Natural killer cell (primary cell): ENCODE measurements at regions of chr20 and their contacts with region 1.

Region 1: GRCh38 chr20:21303061-21303871 is at the start of gene XRN2:
- DNase-seq: peak; percentile 94 to 97
- ATAC-seq: peak; percentile 83 to 92 (median 91)
- H3K4me3 ChIP-seq: peak within 1 kb of the TSS; percentile 71
- H3K4me3 Mint-ChIP-seq: peak within 1 kb of the TSS; percentile 99
- H3K27ac ChIP-seq: peak within 1 kb of the TSS; percentile 81
- H3K27ac Mint-ChIP-seq: peak within 1 kb of the TSS; percentile 95 to 98
- H3K4me1 ChIP-seq: peaks cover 3% of the 10 kb centered on the region
- H3K4me1 Mint-ChIP-seq: peaks cover 26 to 30% of the 10 kb centered on the region in 2 donors
- H3K27me3 ChIP-seq: no peaks in the 10 kb centered on the region
- H3K27me3 Mint-ChIP-seq: peaks cover 0 to 6% of the 10 kb centered on the region in 2 donors
- CTCF ChIP-seq: no peak
- total RNA-seq, gene XRN2: 52.9 to 61.8 (median 57.4) TPM

Region 2: GRCh38 chr20:20712474-20713243 is 590.6 kb before region 1 on chr20 and contains the start of gene RALGAPA2:
- intact Hi-C with region 1: loop called (anchors 5 kb)
- DNase-seq: peak; percentile 93 to 96
- ATAC-seq: peak; percentile 92 to 98 (median 94)
- H3K4me3 ChIP-seq: peak within 1 kb of the TSS; percentile 57
- H3K4me3 Mint-ChIP-seq: peak within 1 kb of the TSS; percentile 93
- H3K27ac ChIP-seq: peak within 1 kb of the TSS; percentile 87
- H3K27ac Mint-ChIP-seq: peak within 1 kb of the TSS; percentile 89 to 94
- H3K4me1 ChIP-seq: peaks cover 17% of the 10 kb centered on the region
- H3K4me1 Mint-ChIP-seq: peaks cover 32 to 34% of the 10 kb centered on the region in 2 donors
- H3K27me3 ChIP-seq: no peaks in the 10 kb centered on the region
- H3K27me3 Mint-ChIP-seq: no peaks in the 10 kb centered on the region
- CTCF ChIP-seq: no peak
- total RNA-seq, gene RALGAPA2: 26.6 to 33.9 (median 33.1) TPM

Region 3: DNA sequence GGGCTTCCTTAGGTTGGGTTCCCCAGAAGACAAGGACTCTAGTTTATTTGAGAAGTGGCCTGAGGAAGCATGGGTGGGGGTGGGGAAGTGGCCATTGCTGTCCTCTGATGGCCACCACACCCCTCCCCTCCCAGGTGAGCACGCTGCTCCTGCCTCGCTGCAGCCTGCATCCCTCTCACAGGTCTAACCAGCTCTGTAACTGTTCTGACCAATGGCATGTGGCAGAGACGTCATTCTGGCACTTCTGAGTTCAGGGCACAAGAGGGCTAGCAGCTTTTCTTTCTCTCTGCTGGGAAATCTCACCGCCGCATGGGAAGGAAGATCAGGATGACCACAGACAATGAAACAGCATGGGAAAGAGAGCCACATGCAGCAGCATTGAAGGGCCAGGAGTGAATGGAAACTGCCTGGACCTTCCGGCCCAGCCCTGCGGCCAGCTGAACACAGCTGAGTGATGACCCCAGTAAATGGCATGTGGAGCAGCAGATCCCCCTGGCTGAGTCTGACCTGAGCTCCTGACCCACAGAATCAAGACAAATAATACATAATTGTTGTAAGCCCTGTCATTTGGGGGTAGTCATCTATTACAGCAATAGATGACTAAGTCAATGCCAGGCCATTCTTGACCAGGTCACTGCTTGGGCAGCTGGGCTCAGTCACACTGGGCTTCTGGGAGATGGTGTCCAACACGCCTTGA is 376.9 kb before region 1 on chr20:
- intact Hi-C with region 1: no loop called
- DNase-seq: no peak
- ATAC-seq: no peak
- H3K4me3 ChIP-seq: no peak overlapping the region
- H3K4me3 Mint-ChIP-seq: no peak overlapping the region
- H3K27ac ChIP-seq: no peak overlapping the region
- H3K27ac Mint-ChIP-seq: no peak overlapping the region
- H3K4me1 ChIP-seq: no peaks in the 10 kb centered on the region
- H3K4me1 Mint-ChIP-seq: no peaks in the 10 kb centered on the region
- H3K27me3 ChIP-seq: no peaks in the 10 kb centered on the region
- H3K27me3 Mint-ChIP-seq: peaks cover 18 to 24% of the 10 kb centered on the region in 2 donors
- CTCF ChIP-seq: no peak

Region 4: GRCh38 chr20:20989081-20989480 is 314.2 kb before region 1 on chr20:
- intact Hi-C with region 1: no loop called
- DNase-seq: no peak
- ATAC-seq: no peak
- H3K4me3 ChIP-seq: no peak overlapping the region
- H3K4me3 Mint-ChIP-seq: no peak overlapping the region
- H3K27ac ChIP-seq: no peak overlapping the region
- H3K27ac Mint-ChIP-seq: no peak overlapping the region
- H3K4me1 ChIP-seq: no peaks in the 10 kb centered on the region
- H3K4me1 Mint-ChIP-seq: no peaks in the 10 kb centered on the region
- H3K27me3 ChIP-seq: no peaks in the 10 kb centered on the region
- H3K27me3 Mint-ChIP-seq: peaks cover 2 to 26% of the 10 kb centered on the region in 2 donors
- CTCF ChIP-seq: no peak

Region 5: DNA sequence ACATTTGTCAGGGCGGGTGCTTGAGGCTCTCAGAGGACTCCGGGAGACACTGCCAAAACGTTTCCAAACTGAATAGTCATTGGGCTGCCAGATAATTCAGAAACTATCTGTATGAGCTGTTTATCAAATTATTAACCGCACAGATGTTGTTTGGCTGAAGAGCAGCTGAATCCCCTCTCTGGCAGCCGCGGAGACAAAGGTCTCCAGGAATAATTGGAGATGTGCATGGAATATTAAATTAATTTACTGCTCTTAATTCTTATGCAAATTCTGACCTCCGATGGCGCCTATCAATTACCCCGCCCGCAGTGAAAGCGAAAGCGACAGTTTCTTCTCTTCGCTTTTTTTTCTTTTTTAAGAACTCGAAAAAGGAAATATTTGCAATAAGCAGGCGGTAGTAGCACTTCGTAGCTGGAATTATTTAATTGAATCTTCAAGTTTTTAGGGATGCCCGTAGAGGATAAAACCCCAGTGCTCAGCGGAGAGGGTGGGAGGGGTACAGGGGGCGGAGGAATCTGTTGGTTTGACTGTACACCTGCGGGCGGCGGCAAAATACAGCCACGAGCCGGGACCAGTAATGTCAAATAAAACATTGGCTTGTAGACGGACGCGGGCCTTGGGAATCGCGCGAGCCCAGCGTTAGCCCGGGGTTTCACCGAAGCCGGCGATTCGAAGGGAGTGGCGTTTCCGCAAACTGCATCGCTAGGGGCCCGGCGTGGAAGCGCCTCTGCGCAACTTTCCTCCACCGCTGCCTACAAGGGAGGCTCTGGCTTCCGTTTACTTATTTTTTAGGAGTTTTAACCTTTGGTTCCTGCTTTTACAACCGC is 203.3 kb before region 1 on chr20:
- intact Hi-C with region 1: loop called (anchors 10 kb)
- DNase-seq: peak; percentile 39 to 72
- ATAC-seq: peak; percentile 52 to 58 (median 55)
- H3K4me3 ChIP-seq: peak overlapping the region; percentile 43
- H3K4me3 Mint-ChIP-seq: peak overlapping the region; percentile 93
- H3K27ac ChIP-seq: peak overlapping the region; percentile 44
- H3K27ac Mint-ChIP-seq: peak overlapping the region; percentile 69 to 86
- H3K4me1 ChIP-seq: peaks cover 46% of the 10 kb centered on the region
- H3K4me1 Mint-ChIP-seq: peaks cover 28 to 29% of the 10 kb centered on the region in 2 donors
- H3K27me3 ChIP-seq: peaks cover 64% of the 10 kb centered on the region
- H3K27me3 Mint-ChIP-seq: peaks cover 45 to 59% of the 10 kb centered on the region in 2 donors
- CTCF ChIP-seq: no peak

Region 6: DNA sequence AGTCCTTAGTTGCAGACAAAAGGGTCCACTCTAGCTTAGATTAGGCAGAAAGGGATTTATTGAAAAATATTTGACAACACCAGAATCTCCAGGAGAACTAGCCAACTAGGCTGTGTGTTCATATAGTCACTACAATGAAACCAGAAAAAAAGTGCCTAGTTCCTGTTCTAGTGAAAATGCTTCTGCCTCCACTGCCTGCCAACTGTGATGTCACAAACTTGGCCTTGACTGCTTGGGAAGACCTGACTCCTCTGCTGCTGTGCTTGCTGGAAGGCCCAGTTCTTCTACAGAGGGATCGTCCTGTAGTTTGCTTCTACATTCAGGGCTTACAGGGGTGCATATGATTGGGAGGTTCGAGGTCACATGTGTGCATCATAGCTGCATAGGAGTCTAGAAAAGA is 40.5 kb before region 1 on chr20:
- intact Hi-C with region 1: no loop called
- DNase-seq: no peak
- ATAC-seq: no peak
- H3K4me3 ChIP-seq: no peak overlapping the region
- H3K4me3 Mint-ChIP-seq: no peak overlapping the region
- H3K27ac ChIP-seq: no peak overlapping the region
- H3K27ac Mint-ChIP-seq: no peak overlapping the region
- H3K4me1 ChIP-seq: no peaks in the 10 kb centered on the region
- H3K4me1 Mint-ChIP-seq: no peaks in the 10 kb centered on the region
- H3K27me3 ChIP-seq: no peaks in the 10 kb centered on the region
- H3K27me3 Mint-ChIP-seq: peaks cover 11 to 24% of the 10 kb centered on the region in 2 donors
- CTCF ChIP-seq: no peak